ENCODE measurements at regions of chr17 and their contacts with region 1.

Region 1: GRCh38 chr17:27284811-27285415 is 9.0 kb upstream of the WSB1 start:
- DNase-seq: peak; percentile 93
- H3K4me3 ChIP-seq: peak overlapping the region in 1 of 3 experiments; percentile 29
- H3K27ac ChIP-seq: peak overlapping the region; percentile 63
- H3K4me1 ChIP-seq: peaks cover 30% of the 10 kb centered on the region
- H3K27me3 ChIP-seq: no peaks in the 10 kb centered on the region
- CTCF ChIP-seq: no peak
- POLR2A ChIP-seq: peak; percentile 39

Region 2: GRCh38 chr17:27091043-27091497 is 193.8 kb before region 1 on chr17:
- CTCF ChIA-PET with region 1: no interaction called
- POLR2A ChIA-PET with region 1: no interaction called
- dilution Hi-C with region 1: no loop called
- intact Hi-C with region 1: no loop called
- DNase-seq: no peak
- H3K4me3 ChIP-seq: no peak overlapping the region
- H3K27ac ChIP-seq: no peak overlapping the region
- H3K4me1 ChIP-seq: no peaks in the 10 kb centered on the region
- H3K27me3 ChIP-seq: no peaks in the 10 kb centered on the region
- CTCF ChIP-seq: no peak
- POLR2A ChIP-seq: no peak

Region 3: GRCh38 chr17:27265333-27265732 is 19.6 kb before region 1 on chr17:
- CTCF ChIA-PET with region 1: interaction called, 9 read pairs
- POLR2A ChIA-PET with region 1: interaction called, 9 read pairs
- dilution Hi-C with region 1: no loop called
- intact Hi-C with region 1: loop called (anchors 1 kb)
- DNase-seq: peak; percentile 93
- H3K4me3 ChIP-seq: no peak overlapping the region
- H3K27ac ChIP-seq: peak overlapping the region; percentile 55
- H3K4me1 ChIP-seq: peaks cover 33% of the 10 kb centered on the region
- H3K27me3 ChIP-seq: peaks cover 0 to 4% of the 10 kb centered on the region in 2 experiments
- CTCF ChIP-seq: no peak
- POLR2A ChIP-seq: peak; percentile 63